PC-9 (cell line): ENCODE measurements at regions of chr17 and their contacts with region 1.

Region 1: GRCh38 chr17:29407856-29408255 is 17.7 kb downstream of the TAOK1 start:
- DNase-seq: no peak
- H3K4me3 ChIP-seq: no peak overlapping the region
- H3K27ac ChIP-seq: no peak overlapping the region
- H3K4me1 ChIP-seq: peaks cover 6% of the 10 kb centered on the region; the same call in 1 of the 2 replicates
- H3K27me3 ChIP-seq: no peaks in the 10 kb centered on the region
- CTCF ChIP-seq: no peak

Region 2: DNA sequence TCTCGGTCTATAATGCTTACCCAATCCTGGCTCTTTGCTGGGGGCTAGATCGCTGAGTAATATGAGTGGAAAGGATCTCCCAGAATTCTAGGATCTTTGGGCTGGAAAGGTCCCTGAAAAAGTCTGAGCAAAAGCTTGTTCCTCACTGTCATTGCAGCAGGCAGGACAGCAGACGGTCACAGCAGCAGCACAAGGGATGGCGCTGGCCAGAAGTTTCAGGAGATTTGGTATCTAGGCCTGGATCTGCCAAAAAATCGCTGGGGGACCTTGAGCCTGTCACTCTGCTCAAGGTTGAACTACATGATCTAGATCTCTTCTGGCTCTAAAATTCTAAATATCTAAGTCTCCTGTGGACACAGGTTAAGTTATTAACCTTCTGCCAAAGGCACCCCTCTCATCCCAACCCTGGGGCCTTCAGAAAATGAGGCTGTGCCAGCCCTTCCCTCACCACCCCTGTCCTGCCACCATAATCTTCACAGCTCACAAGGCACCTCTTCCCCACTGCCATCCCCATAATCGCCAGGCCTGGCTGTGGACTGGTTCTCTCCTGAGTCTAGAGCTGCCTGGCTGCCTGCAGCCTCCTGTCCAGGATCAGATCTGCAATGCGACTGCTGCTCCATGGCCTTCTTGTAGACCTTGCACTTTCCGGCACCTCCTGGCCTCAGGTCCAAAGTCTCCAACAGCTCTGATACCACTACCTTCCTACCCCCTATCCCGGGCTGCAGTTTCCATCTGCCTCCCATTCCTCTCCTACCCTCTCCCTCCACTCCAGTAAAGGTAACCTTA is 237.9 kb before region 1 on chr17:
- CTCF ChIA-PET with region 1: no interaction called
- POLR2A ChIA-PET with region 1: no interaction called
- intact Hi-C with region 1: no loop called
- DNase-seq: no peak
- H3K4me3 ChIP-seq: no peak overlapping the region
- H3K27ac ChIP-seq: no peak overlapping the region
- H3K4me1 ChIP-seq: peaks cover 22% of the 10 kb centered on the region
- H3K27me3 ChIP-seq: no peaks in the 10 kb centered on the region
- CTCF ChIP-seq: no peak

Region 3: GRCh38 chr17:29180034-29180787 is 227.6 kb before region 1 on chr17 and contains the start of gene MYO18A:
- CTCF ChIA-PET with region 1: no interaction called
- POLR2A ChIA-PET with region 1: no interaction called
- intact Hi-C with region 1: no loop called
- DNase-seq: peak; percentile 54 to 79
- H3K4me3 ChIP-seq: peak within 1 kb of the TSS; percentile 71
- H3K27ac ChIP-seq: peak within 1 kb of the TSS; percentile 97
- H3K4me1 ChIP-seq: peaks cover 47% of the 10 kb centered on the region
- H3K27me3 ChIP-seq: no peaks in the 10 kb centered on the region
- CTCF ChIP-seq: peak; percentile 78
- total RNA-seq, gene MYO18A: 150 and 158 TPM in 2 replicates

Region 4: DNA sequence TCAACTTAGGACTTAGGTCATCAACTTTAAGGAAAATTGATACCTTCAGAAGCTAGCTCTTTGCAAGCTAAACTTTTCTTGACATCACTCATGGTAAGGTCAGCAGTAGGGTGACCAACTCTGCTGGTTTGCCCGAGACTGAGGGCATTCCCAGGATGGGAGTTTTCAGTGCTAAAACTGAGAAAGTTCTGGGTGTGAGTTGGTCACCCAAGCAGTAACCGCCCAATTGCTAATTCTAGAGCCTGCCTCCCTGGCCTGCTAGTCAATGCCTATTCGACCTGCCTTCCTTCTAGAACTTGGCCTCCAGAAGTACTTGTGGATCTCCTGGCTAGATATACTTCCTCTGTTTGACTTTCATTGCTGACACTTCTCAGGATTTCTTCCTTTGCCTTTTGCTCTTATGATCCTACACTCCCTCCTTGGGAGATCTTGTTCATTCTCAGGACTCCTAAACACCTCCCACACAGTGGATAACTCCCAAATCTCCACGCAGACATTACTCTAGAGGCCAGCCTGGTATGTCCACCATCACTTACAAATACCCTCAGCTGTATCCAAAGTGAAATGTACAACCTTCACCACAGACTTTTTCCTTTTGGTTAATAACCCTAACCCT is 217.2 kb before region 1 on chr17:
- CTCF ChIA-PET with region 1: no interaction called
- POLR2A ChIA-PET with region 1: no interaction called
- intact Hi-C with region 1: no loop called
- DNase-seq: no peak
- H3K4me3 ChIP-seq: no peak overlapping the region
- H3K27ac ChIP-seq: no peak overlapping the region
- H3K4me1 ChIP-seq: peaks cover 16% of the 10 kb centered on the region
- H3K27me3 ChIP-seq: no peaks in the 10 kb centered on the region
- CTCF ChIP-seq: no peak

Region 5: GRCh38 chr17:29449865-29450671 is 42.2 kb after region 1 on chr17:
- CTCF ChIA-PET with region 1: no interaction called
- POLR2A ChIA-PET with region 1: no interaction called
- intact Hi-C with region 1: loop called (anchors 5 kb)
- DNase-seq: no peak
- H3K4me3 ChIP-seq: no peak overlapping the region
- H3K27ac ChIP-seq: no peak overlapping the region
- H3K4me1 ChIP-seq: peaks cover 4% of the 10 kb centered on the region; the same call in 1 of the 2 replicates
- H3K27me3 ChIP-seq: no peaks in the 10 kb centered on the region
- CTCF ChIP-seq: no peak

Region 6: DNA sequence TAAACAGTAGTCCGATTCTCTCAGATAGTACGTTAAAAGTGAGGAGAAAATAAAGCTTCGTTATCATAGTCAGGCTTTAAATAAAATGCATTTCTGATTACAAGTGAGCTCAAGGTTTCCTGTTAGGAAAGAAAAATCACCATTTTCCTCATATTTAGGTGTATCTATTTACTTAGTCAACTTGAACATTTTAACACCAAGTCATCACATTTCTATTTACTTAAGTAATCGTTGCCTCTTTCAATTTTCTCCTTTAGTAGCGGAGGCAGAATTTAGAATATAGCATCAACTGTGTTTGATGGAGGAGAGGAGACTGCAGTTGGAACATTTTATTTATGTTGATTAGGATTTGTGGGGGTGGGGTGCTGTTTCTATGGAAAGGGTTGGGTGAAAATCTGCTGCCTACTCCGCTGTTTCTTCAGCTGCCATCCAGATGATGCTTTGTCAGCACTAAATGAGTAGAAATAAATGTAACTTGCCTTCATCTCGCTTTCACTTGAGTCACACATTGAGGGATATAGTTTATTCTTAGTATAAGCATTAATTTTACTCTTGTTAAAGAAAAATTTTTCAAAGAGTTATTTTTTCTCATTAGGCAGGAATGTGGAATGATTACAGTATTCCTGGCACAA is 116.7 kb after region 1 on chr17:
- CTCF ChIA-PET with region 1: no interaction called
- POLR2A ChIA-PET with region 1: no interaction called
- intact Hi-C with region 1: no loop called
- DNase-seq: no peak
- H3K4me3 ChIP-seq: no peak overlapping the region
- H3K27ac ChIP-seq: no peak overlapping the region
- H3K4me1 ChIP-seq: no peaks in the 10 kb centered on the region
- H3K27me3 ChIP-seq: no peaks in the 10 kb centered on the region
- CTCF ChIP-seq: no peak